ENCODE measurements at regions of chr6 and their contacts with region 1.

Region 1: DNA sequence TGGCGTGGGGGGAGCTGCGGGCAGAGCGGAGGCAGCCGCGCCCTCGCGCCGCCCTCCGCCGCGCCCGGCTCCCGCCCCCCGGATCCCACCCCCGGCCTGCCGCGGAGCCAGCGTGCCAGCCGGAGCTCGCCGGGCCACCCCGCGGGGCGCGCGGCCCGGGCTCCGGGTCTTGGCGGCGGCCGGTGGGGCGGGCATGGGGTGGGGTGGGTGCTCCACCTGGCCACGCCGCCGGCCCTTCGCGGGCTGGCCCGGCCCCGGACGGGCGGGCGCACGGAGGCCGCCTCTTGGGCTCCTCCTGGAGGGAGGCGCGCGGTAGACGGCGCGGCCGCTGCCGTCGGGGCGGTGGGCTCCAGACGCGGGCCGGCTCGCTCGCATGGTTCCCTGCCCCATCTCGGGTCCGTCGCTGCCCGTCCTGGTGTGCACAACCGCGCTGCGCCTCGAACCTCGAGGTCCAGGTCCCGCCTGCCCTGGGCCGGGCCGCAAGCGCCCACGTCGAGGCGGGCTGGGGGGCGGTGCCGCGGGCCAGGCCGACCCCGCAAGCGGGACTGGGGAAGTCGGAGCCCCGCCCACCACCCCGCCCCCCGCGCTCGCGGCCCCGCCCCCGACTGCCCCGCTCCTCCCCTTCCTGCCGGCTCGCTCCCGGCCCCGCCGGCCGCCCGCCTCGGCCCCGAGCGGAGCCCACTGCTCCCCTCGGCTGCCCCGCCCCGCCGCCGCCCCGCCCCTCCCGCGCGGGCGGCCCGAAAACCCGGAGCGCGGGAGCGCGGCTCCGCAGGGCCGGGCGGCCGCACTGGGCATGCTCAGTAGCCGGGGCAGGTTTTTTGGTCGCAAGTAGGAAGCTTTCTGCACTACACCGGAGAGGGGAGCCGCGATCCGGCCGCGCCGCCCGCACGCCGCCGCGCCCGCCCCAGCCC is at the start of gene CDYL:
- DNase-seq: peak in 1 of 2 experiments; percentile 92
- H3K4me3 ChIP-seq: peak within 1 kb of the TSS; percentile 59; the same call in 1 of the 2 replicates
- H3K27ac ChIP-seq: no peak within 1 kb of the TSS
- H3K4me1 ChIP-seq: no peaks in the 10 kb centered on the region
- H3K27me3 ChIP-seq: no peaks in the 10 kb centered on the region
- CTCF ChIP-seq: no peak
- total RNA-seq, gene CDYL: 52.7 and 60.8 TPM in 2 replicates

Region 2: GRCh38 chr6:4313044-4313686 is 462.7 kb before region 1 on chr6:
- CTCF ChIA-PET with region 1: no interaction called
- POLR2A ChIA-PET with region 1: interaction called, 8 read pairs
- intact Hi-C with region 1: loop called (anchors 1 kb)
- DNase-seq: peak; percentile 79 to 83
- H3K4me3 ChIP-seq: no peak overlapping the region
- H3K27ac ChIP-seq: peak overlapping the region; percentile 91
- H3K4me1 ChIP-seq: peaks cover 28% of the 10 kb centered on the region
- H3K27me3 ChIP-seq: no peaks in the 10 kb centered on the region
- CTCF ChIP-seq: peak; percentile 67

Region 3: GRCh38 chr6:4381381-4381780 is 394.5 kb before region 1 on chr6:
- CTCF ChIA-PET with region 1: no interaction called
- POLR2A ChIA-PET with region 1: no interaction called
- intact Hi-C with region 1: loop called (anchors 10 kb)
- DNase-seq: no peak
- H3K4me3 ChIP-seq: no peak overlapping the region
- H3K27ac ChIP-seq: no peak overlapping the region
- H3K4me1 ChIP-seq: no peaks in the 10 kb centered on the region
- H3K27me3 ChIP-seq: no peaks in the 10 kb centered on the region
- CTCF ChIP-seq: no peak

Region 4: DNA sequence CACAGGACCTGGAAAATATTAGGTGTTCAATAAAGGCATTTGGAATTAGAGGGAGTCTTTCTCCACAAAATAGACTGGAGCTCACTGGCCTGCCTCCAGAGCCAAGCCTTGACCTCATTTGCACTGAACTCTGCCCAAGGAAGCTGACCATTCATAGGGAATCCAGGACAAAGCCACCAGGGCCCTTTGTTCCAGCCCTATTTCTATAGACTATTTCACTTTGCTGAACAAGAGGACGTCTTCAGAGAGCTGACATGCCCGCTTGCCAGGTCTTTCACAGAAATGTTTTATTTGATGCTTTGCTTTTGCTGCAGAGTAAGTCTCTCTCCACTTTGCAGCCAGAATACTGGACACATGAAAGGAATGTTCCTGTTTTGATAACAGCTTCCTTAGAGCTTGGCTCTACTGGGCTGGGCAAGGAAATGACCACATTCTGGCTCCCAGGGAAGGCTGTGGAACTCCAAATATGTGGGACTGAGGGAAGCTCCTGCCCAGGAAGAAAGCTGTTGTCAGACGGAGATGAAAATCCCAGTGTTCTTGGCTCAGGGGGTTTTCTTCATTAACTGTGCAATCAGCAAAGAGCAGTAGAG is 193.9 kb before region 1 on chr6:
- CTCF ChIA-PET with region 1: no interaction called
- POLR2A ChIA-PET with region 1: interaction called, 12 read pairs
- intact Hi-C with region 1: no loop called
- DNase-seq: peak; percentile 39 to 44
- H3K4me3 ChIP-seq: no peak overlapping the region
- H3K27ac ChIP-seq: peak overlapping the region; percentile 29; the same call in 1 of the 2 replicates
- H3K4me1 ChIP-seq: peaks cover 30% of the 10 kb centered on the region
- H3K27me3 ChIP-seq: no peaks in the 10 kb centered on the region
- CTCF ChIP-seq: no peak

Region 5: DNA sequence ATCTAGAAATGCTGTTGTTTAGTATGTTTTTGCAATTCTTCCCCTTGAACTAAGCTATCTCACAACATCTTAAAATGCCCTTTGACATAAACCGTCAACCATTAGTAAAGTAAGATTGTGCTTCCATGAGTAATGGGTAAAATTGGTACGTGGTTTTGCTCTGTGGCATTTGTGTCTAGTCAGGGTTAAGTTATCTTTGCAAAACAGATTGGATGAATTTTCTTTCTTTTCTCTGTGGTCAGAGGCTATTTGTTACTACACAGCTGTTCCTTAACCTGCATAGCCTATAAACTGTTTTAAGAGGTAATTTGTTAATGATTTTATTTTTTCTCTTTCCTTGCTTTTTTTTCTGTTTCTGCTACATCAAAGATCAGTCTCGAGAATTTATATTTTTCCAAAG is 152.6 kb after region 1 on chr6:
- CTCF ChIA-PET with region 1: interaction called, 11 read pairs
- POLR2A ChIA-PET with region 1: no interaction called
- intact Hi-C with region 1: no loop called
- DNase-seq: no peak
- H3K4me3 ChIP-seq: no peak overlapping the region
- H3K27ac ChIP-seq: no peak overlapping the region
- H3K4me1 ChIP-seq: peaks cover 18% of the 10 kb centered on the region
- H3K27me3 ChIP-seq: no peaks in the 10 kb centered on the region
- CTCF ChIP-seq: no peak

Region 6: GRCh38 chr6:5030596-5031136 is 254.8 kb after region 1 on chr6:
- CTCF ChIA-PET with region 1: no interaction called
- POLR2A ChIA-PET with region 1: no interaction called
- intact Hi-C with region 1: loop called (anchors 5 kb)
- DNase-seq: peak in 1 of 2 experiments; percentile 70
- H3K4me3 ChIP-seq: no peak overlapping the region
- H3K27ac ChIP-seq: no peak overlapping the region
- H3K4me1 ChIP-seq: peaks cover 11% of the 10 kb centered on the region; the same call in 1 of the 2 replicates
- H3K27me3 ChIP-seq: no peaks in the 10 kb centered on the region
- CTCF ChIP-seq: peak; percentile 40; the same call in 1 of the 2 replicates